ENCODE measurements at regions of chr3 and their contacts with region 1.

Region 1: GRCh38 chr3:160707187-160707794 is 30.3 kb downstream of the ARL14 start:
- DNase-seq: no peak
- H3K4me3 ChIP-seq: no peak overlapping the region
- H3K27ac ChIP-seq: no peak overlapping the region
- H3K4me1 ChIP-seq: no peaks in the 10 kb centered on the region
- H3K27me3 ChIP-seq: no peaks in the 10 kb centered on the region
- CTCF ChIP-seq: peak in 2 of 3 experiments; percentile 53 to 63; a peak in 2 of 4 replicates
- EP300 ChIP-seq: no peak
- POLR2A ChIP-seq: no peak
- RAD21 ChIP-seq: peak; percentile 85 to 87

Region 2: GRCh38 chr3:160720123-160720746 is 12.9 kb after region 1 on chr3:
- CTCF ChIA-PET with region 1: interaction called, 25 read pairs
- POLR2A ChIA-PET with region 1: no interaction called
- DNase-seq: no peak
- H3K4me3 ChIP-seq: no peak overlapping the region
- H3K27ac ChIP-seq: no peak overlapping the region
- H3K4me1 ChIP-seq: no peaks in the 10 kb centered on the region
- H3K27me3 ChIP-seq: no peaks in the 10 kb centered on the region
- CTCF ChIP-seq: peak in 2 of 3 experiments; percentile 36 to 56; a peak in 3 of 4 replicates
- EP300 ChIP-seq: no peak
- POLR2A ChIP-seq: no peak
- RAD21 ChIP-seq: peak; percentile 23 to 43; a peak in 3 of 4 replicates

Region 3: DNA sequence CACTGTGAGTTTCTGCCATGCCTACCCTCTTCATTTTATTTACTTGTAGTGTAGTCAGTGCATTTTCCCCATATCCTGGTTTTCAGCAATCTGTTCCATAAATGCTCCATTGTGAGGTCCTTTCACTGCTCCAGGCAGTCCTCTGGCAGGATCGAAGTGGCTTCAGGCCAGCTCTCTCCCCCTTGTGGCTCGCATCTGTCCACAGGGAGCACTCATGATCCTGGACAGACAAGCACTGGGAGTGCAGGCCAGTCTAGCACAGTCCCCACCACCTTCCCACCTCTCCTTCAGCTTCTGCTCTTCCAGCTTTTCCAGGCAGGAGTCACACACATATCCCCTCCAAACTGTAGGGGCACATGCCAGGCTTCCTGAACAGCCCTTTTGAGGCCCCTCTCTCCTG is 222.3 kb after region 1 on chr3:
- CTCF ChIA-PET with region 1: interaction called, 26 read pairs
- POLR2A ChIA-PET with region 1: no interaction called
- DNase-seq: no peak
- H3K4me3 ChIP-seq: no peak overlapping the region
- H3K27ac ChIP-seq: no peak overlapping the region
- H3K4me1 ChIP-seq: no peaks in the 10 kb centered on the region
- H3K27me3 ChIP-seq: no peaks in the 10 kb centered on the region
- CTCF ChIP-seq: peak; percentile 15 to 36 (median 27); a peak in 2 of 4 replicates
- EP300 ChIP-seq: no peak
- POLR2A ChIP-seq: no peak
- RAD21 ChIP-seq: peak in 1 of 2 experiments; percentile 16; a peak in 2 of 4 replicates

Region 4: GRCh38 chr3:160941885-160942494 is 234.7 kb after region 1 on chr3:
- CTCF ChIA-PET with region 1: interaction called, 24 read pairs
- POLR2A ChIA-PET with region 1: no interaction called
- DNase-seq: peak in 1 of 2 experiments; percentile 83
- H3K4me3 ChIP-seq: no peak overlapping the region
- H3K27ac ChIP-seq: no peak overlapping the region
- H3K4me1 ChIP-seq: no peaks in the 10 kb centered on the region
- H3K27me3 ChIP-seq: no peaks in the 10 kb centered on the region
- CTCF ChIP-seq: peak in 2 of 3 experiments; percentile 52 to 77; a peak in 2 of 4 replicates
- EP300 ChIP-seq: no peak
- POLR2A ChIP-seq: no peak
- RAD21 ChIP-seq: peak; percentile 83

Measured in H1 (cell line).